CD4-positive, alpha-beta memory T cell (primary cell): ENCODE measurements at regions of chr10 and their contacts with region 1.

Region 1: GRCh38 chr10:12605580-12606405 is 256.4 kb downstream of the CAMK1D start:
- DNase-seq: peak; percentile 55 to 78 (median 72)
- H3K4me3 ChIP-seq: peak overlapping the region; percentile 45 to 64
- H3K4me3 Mint-ChIP-seq: peak overlapping the region; percentile 85 to 96 (median 86)
- H3K27ac ChIP-seq: peak overlapping the region; percentile 66
- H3K27ac Mint-ChIP-seq: peak overlapping the region; percentile 94 to 100 (median 98)
- H3K4me1 ChIP-seq: peaks cover 17% of the 10 kb centered on the region
- H3K4me1 Mint-ChIP-seq: peaks cover 18 to 34% (median 31%) of the 10 kb centered on the region in 4 donors
- H3K27me3 ChIP-seq: no peaks in the 10 kb centered on the region
- H3K27me3 Mint-ChIP-seq: no peaks in the 10 kb centered on the region

Region 2: DNA sequence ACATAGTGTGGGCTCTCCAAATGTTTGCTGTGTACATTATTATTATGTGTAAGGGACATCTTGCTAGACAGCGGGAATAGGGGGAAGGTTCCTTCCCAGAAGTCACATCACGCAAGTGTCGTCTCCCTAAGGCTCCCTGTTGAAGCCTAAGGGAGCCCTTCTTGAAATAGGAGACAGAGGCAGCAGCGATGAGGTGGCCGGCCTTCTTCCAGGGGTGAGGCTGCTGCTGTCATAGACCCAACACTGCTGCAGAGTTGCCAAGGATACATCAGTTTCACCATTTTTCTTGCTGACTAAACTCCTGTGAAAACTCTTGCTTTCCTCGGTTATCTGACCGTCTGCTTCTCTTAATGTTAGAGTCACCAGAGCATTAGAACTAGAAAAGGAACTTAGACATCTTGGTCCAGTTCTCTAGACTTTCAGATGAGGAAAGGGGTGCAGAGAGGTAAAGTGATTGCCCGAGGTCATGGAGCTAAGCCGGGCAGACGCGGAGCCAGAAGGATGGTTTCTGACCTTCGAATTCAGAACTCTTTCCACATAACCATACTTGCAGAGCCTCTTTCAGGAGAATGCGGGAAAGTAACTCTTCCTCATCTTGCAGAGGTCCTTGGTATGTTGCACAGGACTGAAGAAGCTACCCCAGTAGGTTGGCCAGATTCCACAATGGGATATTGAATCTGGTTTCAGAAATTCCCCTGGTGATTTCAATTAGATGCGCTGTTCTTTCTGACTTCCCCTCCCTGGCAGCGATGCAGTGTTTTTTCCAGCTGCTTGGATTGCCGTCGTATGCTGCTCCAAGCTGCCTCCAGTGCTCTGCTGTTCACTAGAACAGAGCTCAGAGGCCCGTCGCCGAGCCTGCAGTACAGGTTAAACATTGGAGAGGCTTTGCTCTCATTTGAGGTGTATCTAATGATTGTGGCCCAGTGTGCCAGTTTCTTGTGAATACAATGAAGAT is 39.4 kb before region 1 on chr10:
- CTCF ChIA-PET with region 1: no interaction called
- POLR2A ChIA-PET with region 1: no interaction called
- intact Hi-C with region 1: no loop called
- DNase-seq: no peak
- H3K4me3 ChIP-seq: no peak overlapping the region
- H3K4me3 Mint-ChIP-seq: no peak overlapping the region
- H3K27ac ChIP-seq: no peak overlapping the region
- H3K27ac Mint-ChIP-seq: peak overlapping the region in 3 of 7 donors; percentile 13 to 61 (median 57)
- H3K4me1 ChIP-seq: no peaks in the 10 kb centered on the region
- H3K4me1 Mint-ChIP-seq: peaks cover 21 to 53% (median 34%) of the 10 kb centered on the region in 4 donors
- H3K27me3 ChIP-seq: no peaks in the 10 kb centered on the region
- H3K27me3 Mint-ChIP-seq: no peaks in the 10 kb centered on the region

Region 3: GRCh38 chr10:12588120-12588860 is 17.5 kb before region 1 on chr10:
- CTCF ChIA-PET with region 1: interaction called, 3 read pairs
- POLR2A ChIA-PET with region 1: interaction called, 11 read pairs
- intact Hi-C with region 1: no loop called
- DNase-seq: peak; percentile 40 to 58 (median 54)
- H3K4me3 ChIP-seq: no peak overlapping the region
- H3K4me3 Mint-ChIP-seq: peak overlapping the region; percentile 84 to 95 (median 88)
- H3K27ac ChIP-seq: peak overlapping the region; percentile 21
- H3K27ac Mint-ChIP-seq: peak overlapping the region; percentile 85 to 91 (median 87)
- H3K4me1 ChIP-seq: peaks cover 30% of the 10 kb centered on the region
- H3K4me1 Mint-ChIP-seq: peaks cover 49 to 75% (median 61%) of the 10 kb centered on the region in 4 donors
- H3K27me3 ChIP-seq: no peaks in the 10 kb centered on the region
- H3K27me3 Mint-ChIP-seq: no peaks in the 10 kb centered on the region